Left cardiac atrium (tissue), 4 donors: ENCODE measurements at regions of chr4 and their contacts with region 1.

Region 1: DNA sequence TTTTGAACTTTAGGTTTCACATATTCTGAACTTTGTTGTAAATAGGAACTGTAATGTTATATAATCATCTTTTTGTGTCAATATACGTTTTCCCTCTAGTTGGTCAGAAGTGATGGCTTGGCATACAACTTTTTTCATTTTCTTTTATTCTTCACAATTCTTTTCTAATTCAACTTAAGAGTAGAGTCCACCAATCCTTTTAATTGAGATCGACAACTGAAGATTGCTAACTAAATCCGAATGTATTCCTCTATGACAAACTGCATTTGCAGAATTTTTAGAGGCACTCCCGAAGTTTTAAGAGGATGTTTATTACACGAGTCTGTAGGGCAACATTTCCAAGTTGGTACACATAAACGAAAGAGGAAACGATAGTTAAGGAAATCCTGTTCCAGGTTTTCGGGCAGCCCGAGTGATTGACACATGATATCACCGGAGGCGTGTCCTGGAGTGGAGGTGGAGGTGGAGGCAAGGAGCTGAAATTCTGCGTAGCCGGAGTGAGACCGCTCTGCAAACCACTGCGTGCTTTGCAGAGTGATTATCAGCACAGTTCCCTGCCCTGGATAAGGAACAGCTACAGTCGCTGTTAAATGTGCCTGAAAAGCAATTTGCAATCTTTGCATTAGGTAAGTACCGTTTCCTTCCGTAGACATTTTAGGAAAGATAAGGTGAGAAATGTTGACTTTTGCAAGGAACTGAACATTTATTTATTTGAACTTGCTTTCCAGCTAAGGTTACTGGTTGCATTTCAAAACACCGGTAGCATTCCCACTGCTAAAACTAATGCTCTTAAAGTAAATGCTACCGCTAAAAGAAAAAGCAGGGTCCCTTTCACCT is at the start of gene SPRY1:
- DNase-seq: peak; percentile 85
- ATAC-seq: peak; percentile 83 to 90
- total RNA-seq, gene SPRY1: 59.6 to 89.9 TPM

Region 2: DNA sequence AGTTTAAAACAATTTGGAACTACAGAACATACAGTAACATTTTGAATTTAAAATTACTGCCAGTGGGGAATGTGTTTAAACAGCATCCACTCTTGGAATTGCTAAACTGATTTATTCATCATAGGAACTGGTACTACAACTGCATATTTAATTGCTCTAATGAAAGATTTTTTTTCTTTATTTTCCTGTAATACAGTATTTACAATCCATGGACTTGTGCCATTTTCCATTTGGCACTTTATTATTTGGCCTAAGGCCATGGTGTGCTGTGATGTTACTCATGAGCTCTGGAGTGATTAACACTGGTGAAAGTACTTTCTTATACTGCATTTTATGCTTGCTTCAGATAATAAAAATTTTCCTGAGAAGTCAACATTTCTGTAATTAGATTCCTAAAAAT is 404.5 kb before region 1 on chr4:
- intact Hi-C with region 1: no loop called
- DNase-seq: no peak
- ATAC-seq: peak in 1 of 2 donors; percentile 55

Region 3: GRCh38 chr4:123349421-123350190 is 46.9 kb before region 1 on chr4:
- intact Hi-C with region 1: loop called in 1 of 2 experiments (anchors 5 kb)
- DNase-seq: no peak
- ATAC-seq: peak; percentile 56 to 92

Region 4: GRCh38 chr4:123649645-123650391 is 253.3 kb after region 1 on chr4:
- intact Hi-C with region 1: loop called (anchors 5 to 10 kb)
- DNase-seq: no peak
- ATAC-seq: peak; percentile 61 to 63

Region 5: GRCh38 chr4:124105212-124105611 is 708.7 kb after region 1 on chr4:
- intact Hi-C with region 1: loop called in 1 of 2 experiments (anchors 10 kb)
- DNase-seq: no peak
- ATAC-seq: peak in 1 of 2 donors; percentile 49